Activated T-helper 1 cell treated with anti-CD3 and anti-CD28 coated beads, Interleukin-12 subunit alpha, Interleukin-12 subunit beta, Interleukin-2, Interleukin-4 antibody, amounts not matched to agents 30 ng/mL and 10 ng/mL and 1 ng/mL, durations not matched to agents 14 hours and 24 hours and 36 hours (primary cell): ENCODE measurements at regions of chr13 and their contacts with region 1.

Region 1: GRCh38 chr13:25375727-25376358 is 4.1 kb downstream of the ATP8A2 start:
- DNase-seq: no peak
- H3K4me3 Mint-ChIP-seq: no peak overlapping the region
- H3K27ac Mint-ChIP-seq: no peak overlapping the region
- H3K4me1 Mint-ChIP-seq: no peaks in the 10 kb centered on the region
- H3K27me3 Mint-ChIP-seq: peaks cover 62% of the 10 kb centered on the region

Region 2: GRCh38 chr13:25085125-25085742 is 290.6 kb before region 1 on chr13:
- intact Hi-C with region 1: loop called (anchors 1 kb)
- DNase-seq: no peak
- H3K4me3 Mint-ChIP-seq: no peak overlapping the region
- H3K27ac Mint-ChIP-seq: no peak overlapping the region
- H3K4me1 Mint-ChIP-seq: no peaks in the 10 kb centered on the region
- H3K27me3 Mint-ChIP-seq: peaks cover 4% of the 10 kb centered on the region

Region 3: DNA sequence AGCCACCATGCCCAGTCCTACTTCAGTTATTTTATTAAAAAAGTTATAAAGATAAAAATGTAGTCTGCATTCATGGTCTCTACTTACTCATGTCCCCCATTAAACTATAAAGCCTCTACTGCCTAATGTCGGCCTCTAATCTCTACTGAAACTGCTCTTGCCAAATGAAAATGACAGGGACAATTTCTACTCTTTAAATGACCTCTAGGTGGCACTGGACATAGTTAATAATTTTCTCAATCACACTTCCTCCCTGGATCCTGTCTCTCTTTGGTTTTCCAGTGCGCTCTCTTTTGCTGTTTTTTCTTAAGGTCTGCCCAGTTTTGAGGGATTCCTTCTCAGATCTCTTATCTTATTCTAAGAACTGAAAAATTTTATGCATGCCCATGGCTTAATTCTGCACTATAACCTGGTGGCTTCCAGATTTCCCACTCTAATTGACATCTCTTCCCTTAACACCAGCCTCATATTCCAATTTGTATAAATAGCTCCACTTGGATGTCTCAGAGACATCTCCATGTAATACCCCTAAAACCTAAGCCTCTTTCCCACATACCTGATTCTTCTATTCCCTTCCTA is 142.8 kb before region 1 on chr13:
- intact Hi-C with region 1: loop called (anchors 1 kb)
- DNase-seq: no peak
- H3K4me3 Mint-ChIP-seq: no peak overlapping the region
- H3K27ac Mint-ChIP-seq: no peak overlapping the region
- H3K4me1 Mint-ChIP-seq: no peaks in the 10 kb centered on the region
- H3K27me3 Mint-ChIP-seq: no peaks in the 10 kb centered on the region

Region 4: DNA sequence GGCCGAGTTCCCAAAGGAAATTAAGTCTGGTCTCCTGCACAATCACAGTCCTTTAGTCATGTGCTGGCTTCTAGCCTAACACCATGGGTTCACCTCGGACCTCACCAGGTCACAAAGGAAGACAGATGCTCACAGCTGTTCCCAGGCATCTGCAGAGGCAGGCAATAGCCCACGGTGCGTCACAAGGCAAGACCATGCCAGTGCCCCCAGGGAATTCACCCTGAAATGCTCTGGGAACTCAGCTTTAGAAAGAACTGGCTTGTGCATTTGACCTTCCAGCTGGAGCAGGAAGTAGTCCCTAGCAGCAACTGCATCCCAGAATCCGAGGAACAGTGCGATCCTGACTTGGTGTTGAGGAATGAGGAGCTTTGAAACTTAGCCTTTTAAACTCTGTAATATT is 1084.8 kb after region 1 on chr13:
- intact Hi-C with region 1: no loop called
- DNase-seq: no peak
- H3K4me3 Mint-ChIP-seq: no peak overlapping the region
- H3K27ac Mint-ChIP-seq: no peak overlapping the region
- H3K4me1 Mint-ChIP-seq: no peaks in the 10 kb centered on the region
- H3K27me3 Mint-ChIP-seq: peaks cover 6% of the 10 kb centered on the region